G401 (cell line): ENCODE measurements at regions of chr10 and their contacts with region 1.

Region 1: GRCh38 chr10:102579328-102579727 is 65.0 kb upstream of the TRIM8 start:
- DNase-seq: no peak

Region 2: DNA sequence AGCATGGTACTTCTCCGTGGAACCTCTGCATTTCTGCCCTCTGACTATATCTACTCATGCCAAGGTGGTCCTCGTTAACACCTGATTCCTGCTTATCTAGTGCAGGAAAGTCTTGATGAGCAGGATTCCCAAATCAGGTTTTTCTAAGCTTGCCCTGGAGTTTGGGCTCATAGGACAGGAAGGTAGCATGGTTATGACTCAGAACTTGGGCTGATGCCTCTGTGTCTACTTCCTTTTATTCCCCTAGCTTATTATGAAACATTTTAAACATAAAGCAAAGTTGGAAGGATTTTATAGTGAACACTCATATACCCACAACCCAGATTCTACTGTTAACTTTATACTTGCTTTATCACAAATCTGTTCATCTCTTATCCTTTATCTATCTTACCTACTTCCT is 69.9 kb before region 1 on chr10:
- in situ Hi-C with region 1: loop called (anchors 5 kb)
- DNase-seq: no peak